ENCODE measurements at regions of chr6 and their contacts with region 1.

Region 1: GRCh38 chr6:2799936-2800527 is 34.8 kb downstream of the WRNIP1 start:
- DNase-seq: peak; percentile 45 to 79 (median 66)
- H3K4me3 ChIP-seq: no peak overlapping the region
- H3K27ac ChIP-seq: peak overlapping the region in 1 of 2 experiments; percentile 57
- H3K4me1 ChIP-seq: peaks cover 14 to 61% (median 56%) of the 10 kb centered on the region in 4 experiments
- H3K27me3 ChIP-seq: no peaks in the 10 kb centered on the region

Region 2: DNA sequence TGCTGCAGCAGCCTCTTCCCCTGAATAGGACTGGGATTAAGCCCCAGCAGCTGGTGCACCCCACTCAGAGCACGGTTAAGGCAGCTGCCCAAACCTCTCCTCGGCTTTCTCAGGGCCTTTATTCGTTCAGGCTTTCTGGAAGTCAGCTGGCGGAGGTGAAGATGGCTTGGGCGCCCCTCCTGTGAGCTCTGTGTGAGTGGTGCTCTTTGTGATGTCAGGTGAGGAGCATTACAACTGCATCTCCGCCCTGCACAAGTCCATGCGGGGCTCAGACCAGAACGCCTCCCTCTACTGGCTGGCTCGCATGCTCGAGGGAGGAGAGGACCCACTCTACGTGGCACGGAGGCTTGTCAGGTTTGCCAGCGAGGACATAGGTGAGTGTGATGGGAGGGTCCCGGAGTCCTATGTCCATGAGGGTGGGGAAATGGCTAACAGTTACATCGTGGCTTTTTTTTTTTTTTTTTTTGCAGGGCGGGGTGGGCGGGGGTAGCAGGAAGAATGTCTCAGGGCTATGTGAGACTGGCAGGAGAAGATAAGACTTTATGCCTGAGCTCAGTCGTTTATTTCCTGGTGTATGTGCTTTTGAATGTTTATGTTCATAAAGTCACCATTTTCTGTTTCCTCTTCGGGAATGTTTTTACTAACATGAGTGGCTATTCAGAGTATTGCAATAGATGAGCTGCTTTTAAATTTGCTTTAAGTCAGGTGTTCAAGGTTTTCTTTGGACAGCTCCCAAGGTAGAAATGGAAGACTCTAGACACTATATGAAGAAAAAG is 16.7 kb before region 1 on chr6:
- CTCF ChIA-PET with region 1: interaction called, 10 read pairs
- POLR2A ChIA-PET with region 1: no interaction called
- DNase-seq: peak; percentile 75 to 95 (median 90)
- H3K4me3 ChIP-seq: peak overlapping the region in 3 of 7 experiments; percentile 30 to 49 (median 46)
- H3K27ac ChIP-seq: peak overlapping the region; percentile 71 to 78
- H3K4me1 ChIP-seq: peaks cover 15 to 55% (median 39%) of the 10 kb centered on the region in 4 experiments
- H3K27me3 ChIP-seq: no peaks in the 10 kb centered on the region

Region 3: GRCh38 chr6:3118353-3119039 is 318.5 kb after region 1 on chr6 and contains the start of gene BPHL:
- CTCF ChIA-PET with region 1: no interaction called
- POLR2A ChIA-PET with region 1: no interaction called
- DNase-seq: peak; percentile 91 to 96 (median 94)
- H3K4me3 ChIP-seq: peak within 1 kb of the TSS; percentile 77 to 95 (median 92)
- H3K27ac ChIP-seq: peak within 1 kb of the TSS; percentile 71 to 89
- H3K4me1 ChIP-seq: peaks cover 7 to 13% (median 12%) of the 10 kb centered on the region in 4 experiments
- H3K27me3 ChIP-seq: no peaks in the 10 kb centered on the region

Measured in common myeloid progenitor, CD34-positive (primary cell).